Activated T-helper 2 cell treated with anti-CD3 and anti-CD28 coated beads, Interferon-gamma antibody, Interleukin-2, Interleukin-4, amounts not matched to agents 10 μg/mL and 5 μg/mL and 100 μg/mL, durations not matched to agents 14 hours and 24 hours and 36 hours (primary cell): ENCODE measurements at regions of chr13 and their contacts with region 1.

Region 1: GRCh38 chr13:42474954-42475353 is 99.0 kb upstream of the TNFSF11 start:
- DNase-seq: no peak
- H3K4me3 Mint-ChIP-seq: no peak overlapping the region
- H3K27ac Mint-ChIP-seq: peak overlapping the region; percentile 80
- H3K4me1 Mint-ChIP-seq: peaks cover 35% of the 10 kb centered on the region
- H3K27me3 Mint-ChIP-seq: no peaks in the 10 kb centered on the region

Region 2: DNA sequence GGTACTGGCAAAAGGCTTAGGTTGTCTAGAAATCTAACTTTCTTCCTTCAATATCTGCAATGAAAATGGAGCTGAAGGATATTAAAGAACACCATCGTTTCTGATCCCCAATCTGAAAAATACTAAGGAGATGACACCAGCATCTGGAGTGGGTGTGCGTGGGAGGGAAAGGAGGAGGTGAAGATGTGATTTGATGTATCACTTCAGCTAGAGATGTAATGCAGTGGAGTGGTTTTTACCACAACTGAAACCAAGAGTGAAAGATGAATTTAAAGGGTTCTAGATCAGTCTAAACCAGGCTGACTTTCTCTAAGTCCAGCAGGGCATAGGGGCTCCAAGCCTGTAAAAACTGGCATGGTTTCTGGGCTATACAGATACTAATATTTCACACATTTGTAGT is 54.6 kb before region 1 on chr13:
- intact Hi-C with region 1: no loop called
- DNase-seq: no peak
- H3K4me3 Mint-ChIP-seq: no peak overlapping the region
- H3K27ac Mint-ChIP-seq: peak overlapping the region; percentile 58
- H3K4me1 Mint-ChIP-seq: peaks cover 44% of the 10 kb centered on the region
- H3K27me3 Mint-ChIP-seq: no peaks in the 10 kb centered on the region

Region 3: DNA sequence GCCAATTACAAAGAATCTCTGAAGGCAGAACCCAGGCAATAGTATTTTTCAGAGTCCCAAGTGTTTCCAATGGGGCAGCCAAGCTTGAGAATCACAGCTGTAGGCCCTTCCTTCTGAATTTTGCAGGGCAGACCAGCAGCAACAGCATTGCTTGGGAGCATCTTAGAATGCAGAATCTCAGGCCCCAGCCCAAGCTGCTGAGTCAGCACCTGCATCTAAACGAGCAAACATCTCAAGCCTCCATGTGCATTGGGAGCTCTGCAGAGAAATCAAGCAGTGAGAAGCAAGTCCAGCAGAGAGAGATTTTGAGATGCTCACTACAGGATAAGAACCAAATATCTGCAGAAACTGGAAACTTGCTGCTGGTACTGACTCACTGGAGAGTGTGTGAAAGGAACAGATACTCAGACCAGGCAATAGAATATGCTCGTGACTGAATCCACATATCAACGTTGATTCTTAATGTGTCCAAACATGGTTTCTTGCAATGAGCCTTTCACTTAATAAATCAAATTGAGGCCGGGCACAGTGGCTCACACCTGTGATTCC is 17.5 kb after region 1 on chr13:
- intact Hi-C with region 1: loop called (anchors 2 kb)
- DNase-seq: no peak
- H3K4me3 Mint-ChIP-seq: no peak overlapping the region
- H3K27ac Mint-ChIP-seq: peak overlapping the region; percentile 47
- H3K4me1 Mint-ChIP-seq: peaks cover 54% of the 10 kb centered on the region
- H3K27me3 Mint-ChIP-seq: no peaks in the 10 kb centered on the region

Region 4: GRCh38 chr13:42553098-42554046 is 78.4 kb after region 1 on chr13:
- intact Hi-C with region 1: no loop called
- DNase-seq: no peak
- H3K4me3 Mint-ChIP-seq: no peak overlapping the region
- H3K27ac Mint-ChIP-seq: no peak overlapping the region
- H3K4me1 Mint-ChIP-seq: peaks cover 19% of the 10 kb centered on the region
- H3K27me3 Mint-ChIP-seq: no peaks in the 10 kb centered on the region